Adrenal gland (tissue), 19 donors: ENCODE measurements at regions of chr10 and their contacts with region 1.

Region 1: DNA sequence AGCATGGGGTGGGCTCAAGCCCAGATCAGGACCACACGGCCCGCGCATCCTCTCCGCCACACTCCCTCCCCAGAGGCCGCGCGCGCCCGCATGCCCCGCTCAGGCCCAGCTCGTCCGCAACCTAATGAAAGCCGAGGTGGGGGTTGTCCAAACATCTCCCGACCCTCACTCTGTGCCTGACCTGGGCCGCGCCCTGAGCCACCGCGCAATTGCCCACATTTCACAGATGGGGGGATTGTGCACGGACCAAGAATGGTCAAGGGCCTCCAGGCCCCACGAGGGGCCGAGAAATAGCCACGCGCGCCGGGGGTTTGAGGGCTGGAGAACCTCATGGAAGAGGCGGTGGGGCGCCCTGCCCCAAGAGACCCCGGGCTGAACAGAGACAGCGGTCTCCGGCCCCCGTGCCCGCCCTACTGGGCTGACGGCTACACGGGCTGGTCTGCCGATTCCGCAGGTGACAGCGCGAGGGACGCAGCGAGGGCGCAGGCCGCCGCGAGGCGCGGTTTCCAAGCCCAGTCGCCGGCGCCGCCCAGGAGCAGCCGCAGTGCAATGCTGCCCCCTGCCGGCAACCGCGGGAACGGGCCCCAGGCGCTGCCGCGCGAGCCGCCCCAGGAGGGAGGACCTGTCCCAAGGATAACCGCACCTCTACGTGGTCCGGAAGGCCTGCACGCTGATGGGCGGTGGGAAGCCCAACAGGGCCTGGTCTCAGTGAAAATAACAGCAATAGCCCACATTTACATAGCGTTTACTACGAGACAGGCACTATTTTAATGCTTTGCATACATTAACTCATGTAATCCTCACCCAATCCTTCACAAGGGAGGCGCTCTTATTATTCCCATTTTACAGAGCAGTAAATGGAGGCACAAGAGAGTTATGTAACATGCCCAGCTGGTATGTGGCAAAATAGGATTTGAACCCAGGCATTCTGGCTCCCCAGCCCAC is 10.5 kb upstream of the GRID1 start:
- DNase-seq: peak; percentile 52 to 86 (median 77)
- H3K4me3 ChIP-seq: peak overlapping the region in 1 of 4 donors; percentile 10
- H3K27ac ChIP-seq: no peak overlapping the region
- H3K4me1 ChIP-seq: peaks cover 0 to 3% of the 10 kb centered on the region in 2 donors
- H3K27me3 ChIP-seq: peaks cover 22% of the 10 kb centered on the region
- CTCF ChIP-seq: peak; percentile 68 to 100 (median 90)
- POLR2A ChIP-seq: no peak

Region 2: DNA sequence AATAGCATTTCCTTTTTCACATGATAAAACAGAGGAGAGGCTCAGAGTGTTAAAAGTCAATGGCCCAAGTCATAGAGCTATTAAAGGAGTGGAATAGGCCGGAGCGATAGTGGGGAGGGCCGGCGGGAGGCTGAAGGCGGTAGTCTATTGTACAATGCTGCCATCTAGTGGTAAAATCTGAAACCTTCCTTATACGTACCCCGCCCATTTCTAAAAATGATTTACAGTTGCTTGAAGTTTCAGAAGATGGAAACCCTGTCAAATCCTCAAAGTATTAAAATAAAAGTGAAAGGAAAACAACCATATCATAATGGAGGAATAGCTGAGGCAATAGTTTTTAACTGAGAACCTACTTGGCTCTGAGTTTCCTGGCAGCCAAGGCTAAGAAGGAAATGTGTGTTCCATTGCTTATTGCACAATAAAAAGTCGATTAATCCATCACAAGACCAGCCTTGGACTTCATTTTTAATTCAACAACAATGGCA is 1839.6 kb before region 1 on chr10:
- intact Hi-C with region 1: loop called in 1 of 2 experiments (anchors 5 kb)
- DNase-seq: peak; percentile 34 to 76 (median 62)
- H3K4me3 ChIP-seq: no peak overlapping the region
- H3K27ac ChIP-seq: no peak overlapping the region
- H3K4me1 ChIP-seq: peaks cover 5 to 6% of the 10 kb centered on the region in 2 donors
- H3K27me3 ChIP-seq: peaks cover 13% of the 10 kb centered on the region
- CTCF ChIP-seq: peak; percentile 81 to 91 (median 88)
- POLR2A ChIP-seq: no peak

Region 3: GRCh38 chr10:84789026-84789425 is 1588.1 kb before region 1 on chr10:
- intact Hi-C with region 1: loop called in 1 of 2 experiments (anchors 5 kb)
- DNase-seq: no peak
- H3K4me3 ChIP-seq: no peak overlapping the region
- H3K27ac ChIP-seq: no peak overlapping the region
- H3K4me1 ChIP-seq: no peaks in the 10 kb centered on the region
- H3K27me3 ChIP-seq: no peaks in the 10 kb centered on the region
- CTCF ChIP-seq: no peak
- POLR2A ChIP-seq: no peak

Region 4: DNA sequence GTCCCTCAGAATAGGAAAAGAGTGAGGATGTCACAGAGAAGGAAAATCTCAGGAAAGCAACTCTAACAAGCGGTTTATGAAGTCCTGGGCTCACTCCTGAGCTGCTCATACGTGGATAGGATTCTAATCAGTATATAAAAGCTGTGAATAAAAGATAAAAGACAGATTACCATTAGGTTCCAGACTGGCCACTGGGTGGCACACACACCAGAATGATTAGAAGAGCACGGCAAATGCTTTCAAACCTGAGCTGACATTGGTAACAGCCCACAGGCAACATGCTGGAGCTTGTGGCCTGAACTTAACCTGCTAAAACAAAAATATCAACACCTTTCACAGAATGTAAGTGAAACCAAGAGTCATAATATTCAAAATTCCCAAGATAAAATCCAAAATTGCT is 381.3 kb before region 1 on chr10:
- intact Hi-C with region 1: loop called in 1 of 2 experiments (anchors 10 kb)
- DNase-seq: peak in 6 of 7 donors; percentile 21 to 56 (median 38)
- H3K4me3 ChIP-seq: no peak overlapping the region
- H3K27ac ChIP-seq: no peak overlapping the region
- H3K4me1 ChIP-seq: no peaks in the 10 kb centered on the region
- H3K27me3 ChIP-seq: no peaks in the 10 kb centered on the region
- CTCF ChIP-seq: peak in 5 of 6 experiments; percentile 24 to 43 (median 38)
- POLR2A ChIP-seq: no peak

Region 5: GRCh38 chr10:86100581-86101061 is 276.5 kb before region 1 on chr10:
- intact Hi-C with region 1: loop called in 1 of 2 experiments (anchors 5 kb)
- DNase-seq: peak in 1 of 7 donors; percentile 17
- H3K4me3 ChIP-seq: no peak overlapping the region
- H3K27ac ChIP-seq: no peak overlapping the region
- H3K4me1 ChIP-seq: no peaks in the 10 kb centered on the region
- H3K27me3 ChIP-seq: no peaks in the 10 kb centered on the region
- CTCF ChIP-seq: peak in 5 of 6 experiments; percentile 22 to 50 (median 47)
- POLR2A ChIP-seq: no peak

Region 6: DNA sequence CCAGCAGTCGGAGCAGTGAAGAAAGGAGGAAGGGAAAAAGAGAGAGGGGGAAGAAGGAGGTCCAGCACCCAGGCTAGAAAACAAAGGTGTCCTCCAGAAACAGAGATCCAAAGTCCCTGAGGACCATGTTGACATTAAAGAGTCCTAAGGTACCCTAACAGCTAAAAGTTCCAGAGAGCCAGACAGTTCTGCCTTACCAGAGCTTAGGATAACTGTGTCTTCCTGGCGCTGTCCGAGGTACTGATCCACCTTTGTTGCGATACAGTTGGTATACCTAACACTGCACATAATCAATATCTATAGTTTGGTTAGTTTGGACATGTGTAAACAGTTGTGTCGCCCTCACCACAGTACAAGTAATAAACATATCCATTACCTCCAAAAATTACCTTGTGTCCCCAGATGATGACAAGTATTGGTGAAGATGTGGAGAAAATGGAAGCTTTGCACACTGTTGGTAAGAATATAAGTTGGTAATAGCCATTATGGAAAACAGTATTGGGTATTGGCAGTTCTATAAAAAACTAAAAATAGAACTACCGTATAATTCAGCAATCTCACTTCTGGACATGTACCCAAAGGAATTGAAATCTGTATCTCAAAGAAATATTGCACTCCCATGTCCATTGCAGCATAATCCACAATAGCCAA is 70.4 kb before region 1 on chr10:
- intact Hi-C with region 1: no loop called
- DNase-seq: peak in 1 of 7 donors; percentile 11
- H3K4me3 ChIP-seq: no peak overlapping the region
- H3K27ac ChIP-seq: no peak overlapping the region
- H3K4me1 ChIP-seq: no peaks in the 10 kb centered on the region
- H3K27me3 ChIP-seq: no peaks in the 10 kb centered on the region
- CTCF ChIP-seq: no peak
- POLR2A ChIP-seq: no peak

Region 7: DNA sequence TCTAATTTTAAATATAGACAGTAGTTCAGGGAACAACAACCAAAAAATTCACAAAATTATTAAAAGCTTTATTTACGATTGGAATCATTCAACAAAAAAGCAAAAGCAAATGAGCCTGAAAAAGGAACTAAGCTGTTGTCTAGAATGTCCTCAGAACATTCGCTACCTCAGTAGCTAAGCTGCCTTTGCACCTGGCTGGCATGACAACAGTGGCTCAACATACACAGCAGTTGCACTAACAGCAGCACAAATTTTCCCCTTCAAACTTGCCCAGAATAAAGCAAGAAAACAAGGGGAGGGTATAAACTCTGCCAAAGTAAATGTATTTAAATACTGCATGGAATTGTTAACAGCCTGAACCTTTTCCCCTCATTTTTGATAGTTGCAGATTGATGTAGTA is 59.8 kb after region 1 on chr10:
- intact Hi-C with region 1: no loop called
- DNase-seq: no peak
- H3K4me3 ChIP-seq: no peak overlapping the region
- H3K27ac ChIP-seq: no peak overlapping the region
- H3K4me1 ChIP-seq: peaks cover 0 to 17% of the 10 kb centered on the region in 2 donors
- H3K27me3 ChIP-seq: no peaks in the 10 kb centered on the region
- CTCF ChIP-seq: no peak
- POLR2A ChIP-seq: no peak